PC-9 (cell line): ENCODE measurements at regions of chr12 and their contacts with region 1.

Region 1: GRCh38 chr12:32686340-32686739 is 7.2 kb downstream of the DNM1L start:
- DNase-seq: no peak
- H3K4me3 ChIP-seq: no peak overlapping the region
- H3K27ac ChIP-seq: no peak overlapping the region
- H3K4me1 ChIP-seq: peaks cover 4% of the 10 kb centered on the region; the same call in 1 of the 2 replicates
- H3K27me3 ChIP-seq: no peaks in the 10 kb centered on the region
- CTCF ChIP-seq: no peak

Region 2: DNA sequence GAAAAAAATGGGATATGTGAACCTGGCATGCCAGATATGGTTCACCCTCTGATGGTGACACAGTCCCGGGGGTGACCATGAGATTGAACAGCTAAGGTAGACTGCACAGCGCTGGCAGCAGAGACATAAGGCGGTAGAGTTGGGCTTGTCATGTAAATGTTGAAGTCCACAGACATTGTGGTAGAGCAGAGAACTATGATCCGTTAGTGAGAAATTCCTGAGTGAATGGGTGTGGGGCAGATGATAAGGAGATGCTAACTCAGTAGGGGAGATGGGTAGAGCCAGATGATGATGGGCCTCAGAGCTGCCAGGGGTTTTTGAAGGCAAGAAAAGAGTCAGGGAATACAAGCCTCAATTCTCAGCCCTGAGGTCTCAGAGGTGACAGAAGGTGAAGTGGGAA is 58.4 kb before region 1 on chr12:
- CTCF ChIA-PET with region 1: no interaction called
- POLR2A ChIA-PET with region 1: interaction called, 39 read pairs
- intact Hi-C with region 1: no loop called
- DNase-seq: no peak
- H3K4me3 ChIP-seq: no peak overlapping the region
- H3K27ac ChIP-seq: no peak overlapping the region
- H3K4me1 ChIP-seq: no peaks in the 10 kb centered on the region
- H3K27me3 ChIP-seq: no peaks in the 10 kb centered on the region
- CTCF ChIP-seq: no peak

Region 3: DNA sequence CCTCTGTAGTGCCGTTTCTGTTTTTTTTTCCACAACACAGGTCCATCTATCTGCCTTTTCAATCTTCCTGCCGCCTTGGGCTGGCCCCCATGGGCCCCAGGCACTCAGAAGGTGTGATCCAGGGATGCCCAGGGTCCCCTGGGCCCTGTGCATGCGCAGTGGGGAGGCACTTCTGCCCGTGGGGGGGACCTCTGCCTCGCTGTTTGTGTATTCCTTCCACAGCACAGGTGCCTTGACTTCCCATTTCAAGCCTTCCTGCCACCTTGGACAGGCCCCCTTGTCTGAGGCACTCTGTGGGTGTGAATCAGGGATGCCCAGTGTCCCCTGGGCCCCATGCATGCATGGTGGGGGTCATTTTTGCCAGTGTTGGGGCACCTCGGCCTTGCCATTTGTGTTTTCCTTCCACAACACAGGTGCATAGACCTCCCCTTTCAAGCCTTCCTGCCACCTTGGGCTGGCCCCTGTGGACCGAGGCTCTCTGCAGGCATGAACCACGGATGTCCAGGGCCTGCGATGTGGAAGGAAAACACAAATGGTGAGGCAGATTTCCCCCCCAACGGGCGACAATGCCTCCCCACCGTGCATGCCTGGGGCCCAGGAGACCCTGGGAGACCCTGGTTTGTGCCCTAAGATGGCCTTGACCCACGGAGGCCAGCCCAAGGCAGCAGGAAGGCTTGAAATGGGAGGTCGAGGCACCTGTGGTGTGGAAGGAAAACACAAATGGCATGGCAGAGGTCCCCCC is 1702.5 kb after region 1 on chr12:
- CTCF ChIA-PET with region 1: no interaction called
- POLR2A ChIA-PET with region 1: no interaction called
- intact Hi-C with region 1: no loop called
- DNase-seq: no peak
- H3K4me3 ChIP-seq: no peak overlapping the region
- H3K27ac ChIP-seq: no peak overlapping the region
- H3K4me1 ChIP-seq: no peaks in the 10 kb centered on the region
- H3K27me3 ChIP-seq: peaks cover 100% of the 10 kb centered on the region
- CTCF ChIP-seq: no peak